ENCODE measurements at regions of chr17 and their contacts with region 1.

Region 1: GRCh38 chr17:67082107-67082506 is 37.8 kb downstream of the CACNG1 start:
- DNase-seq: peak in 2 of 9 experiments; percentile 33 to 61
- ATAC-seq: peak; percentile 86
- H3K4me3 ChIP-seq: no peak overlapping the region
- H3K4me3 Mint-ChIP-seq: peak overlapping the region; percentile 21
- H3K27ac ChIP-seq: peak overlapping the region in 1 of 2 experiments; percentile 49
- H3K27ac Mint-ChIP-seq: peak overlapping the region; percentile 74
- H3K4me1 ChIP-seq: peaks cover 16% of the 10 kb centered on the region
- H3K4me1 Mint-ChIP-seq: peaks cover 23% of the 10 kb centered on the region
- H3K27me3 ChIP-seq: no peaks in the 10 kb centered on the region
- H3K27me3 Mint-ChIP-seq: no peaks in the 10 kb centered on the region
- CTCF ChIP-seq: peak; percentile 53

Region 2: GRCh38 chr17:67115401-67115800 is 33.3 kb after region 1 on chr17:
- CTCF ChIA-PET with region 1: no interaction called
- POLR2A ChIA-PET with region 1: no interaction called
- intact Hi-C with region 1: loop called in 1 of 2 experiments (anchors 2 kb)
- DNase-seq: no peak
- ATAC-seq: no peak
- H3K4me3 ChIP-seq: no peak overlapping the region
- H3K4me3 Mint-ChIP-seq: no peak overlapping the region
- H3K27ac ChIP-seq: no peak overlapping the region
- H3K27ac Mint-ChIP-seq: peak overlapping the region; percentile 12
- H3K4me1 ChIP-seq: no peaks in the 10 kb centered on the region
- H3K4me1 Mint-ChIP-seq: peaks cover 6% of the 10 kb centered on the region
- H3K27me3 ChIP-seq: no peaks in the 10 kb centered on the region
- H3K27me3 Mint-ChIP-seq: no peaks in the 10 kb centered on the region
- CTCF ChIP-seq: no peak

Measured in CD8-positive, alpha-beta T cell (primary cell).